ENCODE measurements at regions of chr17 and their contacts with region 1.

Region 1: DNA sequence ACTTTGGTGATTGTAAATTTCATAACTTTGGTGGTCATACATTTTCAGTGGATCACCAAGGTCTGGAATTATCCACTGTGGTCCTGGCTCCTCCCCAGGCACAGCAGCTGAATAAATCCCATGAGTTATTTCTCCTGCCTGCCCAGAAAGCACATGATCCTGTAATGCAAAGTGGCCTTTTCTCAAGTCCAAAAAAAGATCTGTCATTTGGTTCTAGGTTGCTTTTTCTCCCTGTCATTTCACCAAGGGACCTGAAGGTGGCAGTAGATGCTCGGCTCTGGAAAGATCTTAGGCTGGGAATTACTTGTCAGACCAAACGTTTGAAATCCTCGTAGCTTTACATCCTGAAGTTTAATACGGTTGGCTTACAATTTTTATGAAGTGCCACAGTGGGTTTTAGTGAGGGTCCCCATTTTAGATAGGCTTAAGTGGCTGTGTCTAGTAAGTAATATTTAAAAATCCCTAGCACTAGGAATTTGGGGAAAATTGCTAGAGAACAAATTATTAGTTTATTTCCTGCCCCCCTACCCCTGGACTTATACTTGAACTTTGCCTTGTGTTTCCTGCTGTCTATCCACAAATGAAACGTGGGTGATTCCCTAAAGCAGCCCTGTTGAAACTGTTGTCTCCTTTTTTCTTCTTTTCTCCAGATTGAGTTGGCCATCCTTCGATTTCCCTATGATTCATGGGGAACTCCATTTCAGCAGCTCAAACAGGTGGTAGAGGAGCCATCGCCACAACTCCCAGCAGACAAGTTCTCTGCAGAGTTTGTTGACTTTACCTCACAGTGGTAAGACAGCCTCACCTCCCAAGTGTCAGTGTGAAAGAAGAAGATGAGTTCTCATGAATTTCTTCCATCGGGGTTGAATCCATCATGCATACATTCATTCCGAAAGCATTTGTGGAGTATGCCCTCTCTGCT is 111.7 kb downstream of the MAP2K6 start:
- DNase-seq: no peak

Region 2: DNA sequence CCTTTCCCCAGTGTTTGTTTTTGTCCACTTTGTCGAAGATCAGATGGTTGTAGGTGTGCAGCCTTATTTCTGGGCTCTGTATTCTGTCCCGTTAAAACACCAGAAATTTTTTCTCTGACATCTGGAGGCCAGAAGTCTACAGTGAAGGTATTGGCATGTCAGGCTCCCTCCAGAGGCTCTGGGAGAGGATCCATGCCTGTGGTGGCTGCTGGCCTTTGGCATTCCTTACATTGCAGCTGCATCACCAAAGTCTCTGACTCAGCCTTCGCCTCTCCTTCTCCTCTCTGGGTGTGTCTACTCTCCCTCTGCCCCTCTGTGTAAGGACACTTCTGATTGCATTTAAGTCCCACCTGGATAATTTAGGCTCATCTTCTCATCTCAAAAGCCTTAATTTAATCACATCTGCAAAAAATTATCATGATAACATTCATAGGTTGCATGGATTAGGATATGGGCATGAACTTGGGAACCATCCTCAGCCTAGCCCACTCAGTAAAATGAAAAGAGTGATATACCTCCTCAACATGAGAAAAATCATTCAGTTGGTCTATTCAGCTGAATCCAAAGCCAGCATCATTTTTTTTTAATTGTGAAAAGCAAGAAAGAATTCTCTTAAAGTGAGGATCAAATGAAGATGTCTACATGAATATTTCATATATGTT is 33.6 kb before region 1 on chr17:
- intact Hi-C with region 1: no loop called
- DNase-seq: no peak

Region 3: GRCh38 chr17:70089513-70090148 is 563.5 kb after region 1 on chr17:
- intact Hi-C with region 1: no loop called
- DNase-seq: no peak

Region 4: GRCh38 chr17:70552230-70552981 is 1026.2 kb after region 1 on chr17:
- intact Hi-C with region 1: loop called in 1 of 2 experiments (anchors 5 kb)
- DNase-seq: no peak